Panc1 (cell line): ENCODE measurements at regions of chr16 and their contacts with region 1.

Region 1: DNA sequence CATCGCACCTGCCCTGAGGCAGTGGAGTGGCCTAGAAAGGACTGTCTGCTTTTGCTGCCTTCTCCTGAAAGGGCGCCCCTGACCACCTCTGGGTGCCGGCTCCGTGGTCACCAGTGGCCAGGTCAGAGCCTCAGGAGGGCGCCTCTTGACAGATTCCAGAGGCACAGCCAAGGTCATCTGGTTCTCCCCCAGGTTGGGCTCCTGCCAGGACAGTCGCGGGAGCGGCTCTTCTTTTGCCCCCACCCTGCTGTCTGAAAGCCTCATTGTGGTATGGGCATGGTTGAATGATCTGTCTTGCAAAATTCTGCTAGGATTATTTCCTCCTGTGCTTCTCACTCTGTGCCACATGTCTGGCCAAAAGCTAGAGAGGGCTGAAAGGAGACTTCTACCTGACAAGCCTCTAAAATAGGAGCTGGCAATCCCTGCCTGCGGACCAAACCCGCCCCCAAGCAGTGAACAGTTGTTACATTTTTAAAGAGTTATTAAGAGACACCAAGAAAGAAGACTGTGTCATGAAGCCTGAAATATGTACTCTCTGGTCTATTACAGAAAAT is 82.8 kb downstream of the SNX29 start:
- DNase-seq: no peak
- ATAC-seq: no peak
- H3K4me3 ChIP-seq: no peak overlapping the region
- H3K27ac ChIP-seq: no peak overlapping the region
- H3K4me1 ChIP-seq: peaks cover 7% of the 10 kb centered on the region
- H3K27me3 ChIP-seq: no peaks in the 10 kb centered on the region
- CTCF ChIP-seq: no peak

Region 2: DNA sequence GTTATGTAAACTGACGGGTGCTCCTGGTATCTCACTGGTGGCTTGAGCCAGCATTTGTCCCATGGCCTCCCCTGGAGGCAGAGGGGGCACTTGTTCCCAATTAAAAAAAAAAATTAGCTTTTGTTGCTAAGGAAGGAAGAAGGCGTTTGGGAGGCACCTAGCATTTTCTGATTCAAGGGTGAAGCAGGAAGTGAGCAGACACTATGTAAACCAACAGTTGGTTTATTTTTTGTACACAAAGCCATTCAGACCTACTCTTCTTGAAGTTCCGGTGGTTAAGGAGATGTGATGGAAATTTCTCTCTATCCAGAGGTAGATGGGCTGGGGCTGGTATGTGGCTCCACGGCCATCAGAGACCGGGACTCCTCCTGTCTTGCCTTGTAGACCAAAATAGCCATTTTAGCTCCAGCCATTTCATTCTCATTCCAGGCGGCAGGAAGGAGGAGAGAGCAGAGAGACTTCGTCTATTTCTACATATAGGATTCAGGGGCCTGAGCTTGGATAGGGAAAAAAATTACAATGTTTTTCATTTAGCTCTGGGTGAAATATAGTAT is 20.2 kb after region 1 on chr16:
- CTCF ChIA-PET with region 1: no interaction called
- POLR2A ChIA-PET with region 1: no interaction called
- in situ Hi-C with region 1: no loop called
- intact Hi-C with region 1: no loop called
- DNase-seq: no peak
- ATAC-seq: no peak
- H3K4me3 ChIP-seq: no peak overlapping the region
- H3K27ac ChIP-seq: no peak overlapping the region
- H3K4me1 ChIP-seq: no peaks in the 10 kb centered on the region
- H3K27me3 ChIP-seq: no peaks in the 10 kb centered on the region
- CTCF ChIP-seq: no peak

Region 3: DNA sequence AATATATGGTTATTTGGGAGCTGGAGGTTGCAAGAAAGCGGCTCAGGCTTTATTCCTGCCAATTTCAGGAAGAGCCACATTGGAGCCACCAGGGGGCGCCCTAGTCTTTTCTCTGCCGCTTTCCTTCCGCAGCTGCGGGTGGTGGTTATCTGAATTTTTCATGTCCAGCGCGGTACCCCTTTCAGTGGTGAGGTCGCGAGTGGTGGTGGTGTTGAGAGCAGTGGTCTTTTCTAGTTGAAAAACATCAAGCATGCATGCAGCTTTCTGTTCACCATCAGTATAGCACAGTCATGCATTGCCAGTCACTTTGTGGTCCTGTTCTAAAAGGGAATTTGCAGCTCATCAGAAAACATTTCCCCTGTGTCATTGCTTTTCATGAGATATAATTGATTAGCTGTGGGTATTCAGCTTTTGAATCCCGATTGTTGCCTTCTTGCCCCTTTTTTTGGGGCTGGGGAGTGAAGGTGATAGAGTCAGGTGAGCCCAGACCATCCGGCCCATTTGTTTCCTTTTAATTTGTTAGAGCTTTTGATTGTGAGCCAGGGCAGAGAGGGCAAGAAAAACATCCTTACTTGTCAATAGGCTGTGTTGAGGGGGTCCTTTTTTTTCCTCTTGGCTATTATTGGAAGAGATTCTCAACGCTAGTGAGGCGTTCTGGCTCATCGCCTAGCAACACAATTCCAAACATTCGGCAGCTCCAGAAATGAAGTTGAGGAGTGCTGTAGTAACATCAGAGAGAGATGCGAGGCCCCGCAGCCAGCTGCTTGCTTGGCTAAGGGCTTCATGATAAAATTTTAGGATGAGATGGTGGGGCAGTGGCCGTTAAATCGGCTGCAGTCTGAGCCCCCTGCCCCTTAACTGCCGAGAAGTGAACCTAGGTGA is 36.2 kb after region 1 on chr16:
- CTCF ChIA-PET with region 1: no interaction called
- POLR2A ChIA-PET with region 1: interaction called, 12 read pairs
- in situ Hi-C with region 1: no loop called
- intact Hi-C with region 1: no loop called
- DNase-seq: no peak
- ATAC-seq: peak; percentile 60; the same call in 1 of the 2 replicates
- H3K4me3 ChIP-seq: no peak overlapping the region
- H3K27ac ChIP-seq: no peak overlapping the region
- H3K4me1 ChIP-seq: 0 out of 2 replicates have a peak, but pooled peaks cover 4% of the 10 kb centered on the region
- H3K27me3 ChIP-seq: no peaks in the 10 kb centered on the region
- CTCF ChIP-seq: peak; percentile 94